H1 (cell line): ENCODE measurements at regions of chr5 and their contacts with region 1.

Region 1: GRCh38 chr5:127909078-127909477 is 174.5 kb upstream of the SLC12A2 start:
- DNase-seq: peak in 1 of 2 experiments; percentile 13
- H3K4me3 ChIP-seq: no peak overlapping the region
- H3K27ac ChIP-seq: no peak overlapping the region
- H3K4me1 ChIP-seq: no peaks in the 10 kb centered on the region
- H3K27me3 ChIP-seq: no peaks in the 10 kb centered on the region
- CTCF ChIP-seq: peak; percentile 39 to 85 (median 72)
- EP300 ChIP-seq: no peak
- POLR2A ChIP-seq: no peak
- RAD21 ChIP-seq: peak; percentile 69 to 72

Region 2: DNA sequence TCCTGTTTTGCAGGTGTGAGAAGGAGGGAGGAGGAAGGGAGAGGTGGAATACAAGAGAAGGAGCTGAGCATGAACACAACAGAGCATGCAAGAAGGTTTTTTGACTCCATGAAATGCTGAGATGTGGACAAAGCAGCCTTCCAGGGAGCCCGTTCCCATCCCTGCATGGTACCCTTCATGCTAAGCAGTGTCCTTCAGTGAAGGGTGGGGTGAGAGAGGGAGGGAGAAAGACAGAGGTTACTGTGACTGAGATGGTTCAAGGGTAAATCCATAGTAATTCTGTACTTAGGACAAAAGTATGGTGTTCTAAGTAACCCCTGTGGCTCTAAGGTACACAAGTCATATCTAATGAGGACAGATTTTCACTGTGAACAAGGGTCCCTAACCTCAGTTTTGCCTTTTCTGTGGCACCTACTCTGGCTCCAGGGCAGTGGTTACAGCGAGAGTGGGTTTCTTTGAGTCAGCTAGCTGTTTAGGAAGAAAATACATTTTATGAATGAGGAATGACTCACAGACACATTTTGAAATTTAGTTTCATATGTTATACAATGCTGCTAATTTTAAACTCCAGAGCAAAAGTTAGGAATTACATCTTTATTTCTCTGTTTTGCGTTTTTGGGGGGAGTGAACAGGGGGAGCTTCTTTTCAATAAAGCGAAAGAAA is 10.4 kb before region 1 on chr5:
- CTCF ChIA-PET with region 1: interaction called, 23 read pairs
- POLR2A ChIA-PET with region 1: interaction called, 4 read pairs
- DNase-seq: no peak
- H3K4me3 ChIP-seq: no peak overlapping the region
- H3K27ac ChIP-seq: no peak overlapping the region
- H3K4me1 ChIP-seq: peaks cover 0 to 3% (median 0%) of the 10 kb centered on the region in 4 experiments; a peak in 1 of 7 replicates
- H3K27me3 ChIP-seq: no peaks in the 10 kb centered on the region
- CTCF ChIP-seq: no peak
- EP300 ChIP-seq: no peak
- POLR2A ChIP-seq: no peak
- RAD21 ChIP-seq: no peak

Region 3: DNA sequence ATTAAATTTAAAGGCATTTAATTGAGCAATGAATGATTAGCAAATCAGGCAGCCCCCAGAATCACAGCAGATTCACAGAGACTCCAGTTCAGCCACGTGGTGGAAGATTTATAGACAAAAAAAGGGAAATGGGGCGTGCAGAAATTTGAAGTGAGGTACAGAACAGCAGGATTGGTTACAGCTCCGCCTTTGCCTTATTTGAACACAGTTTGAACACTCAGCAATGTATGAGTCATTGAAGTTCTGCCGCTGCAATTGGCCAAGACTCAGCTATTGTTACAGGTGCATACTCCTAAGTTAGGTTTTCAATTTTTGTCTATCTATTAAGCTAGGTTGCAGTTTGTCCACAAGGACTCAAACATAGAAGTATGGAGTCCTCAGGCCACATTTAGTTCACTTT is 16.8 kb after region 1 on chr5:
- CTCF ChIA-PET with region 1: interaction called, 10 read pairs
- POLR2A ChIA-PET with region 1: no interaction called
- DNase-seq: no peak
- H3K4me3 ChIP-seq: no peak overlapping the region
- H3K27ac ChIP-seq: no peak overlapping the region
- H3K4me1 ChIP-seq: no peaks in the 10 kb centered on the region
- H3K27me3 ChIP-seq: peaks cover 0 to 5% (median 4%) of the 10 kb centered on the region in 4 experiments; a peak in 3 of 7 replicates
- CTCF ChIP-seq: no peak
- EP300 ChIP-seq: no peak
- POLR2A ChIP-seq: no peak
- RAD21 ChIP-seq: no peak

Region 4: GRCh38 chr5:128038643-128039042 is 129.6 kb after region 1 on chr5:
- CTCF ChIA-PET with region 1: no interaction called
- POLR2A ChIA-PET with region 1: no interaction called
- DNase-seq: no peak
- H3K4me3 ChIP-seq: no peak overlapping the region
- H3K27ac ChIP-seq: no peak overlapping the region
- H3K4me1 ChIP-seq: no peaks in the 10 kb centered on the region; a peak in 1 of 7 replicates
- H3K27me3 ChIP-seq: no peaks in the 10 kb centered on the region
- CTCF ChIP-seq: no peak
- EP300 ChIP-seq: no peak
- POLR2A ChIP-seq: no peak
- RAD21 ChIP-seq: no peak